ENCODE measurements at regions of chr3 and their contacts with region 1.

Region 1: DNA sequence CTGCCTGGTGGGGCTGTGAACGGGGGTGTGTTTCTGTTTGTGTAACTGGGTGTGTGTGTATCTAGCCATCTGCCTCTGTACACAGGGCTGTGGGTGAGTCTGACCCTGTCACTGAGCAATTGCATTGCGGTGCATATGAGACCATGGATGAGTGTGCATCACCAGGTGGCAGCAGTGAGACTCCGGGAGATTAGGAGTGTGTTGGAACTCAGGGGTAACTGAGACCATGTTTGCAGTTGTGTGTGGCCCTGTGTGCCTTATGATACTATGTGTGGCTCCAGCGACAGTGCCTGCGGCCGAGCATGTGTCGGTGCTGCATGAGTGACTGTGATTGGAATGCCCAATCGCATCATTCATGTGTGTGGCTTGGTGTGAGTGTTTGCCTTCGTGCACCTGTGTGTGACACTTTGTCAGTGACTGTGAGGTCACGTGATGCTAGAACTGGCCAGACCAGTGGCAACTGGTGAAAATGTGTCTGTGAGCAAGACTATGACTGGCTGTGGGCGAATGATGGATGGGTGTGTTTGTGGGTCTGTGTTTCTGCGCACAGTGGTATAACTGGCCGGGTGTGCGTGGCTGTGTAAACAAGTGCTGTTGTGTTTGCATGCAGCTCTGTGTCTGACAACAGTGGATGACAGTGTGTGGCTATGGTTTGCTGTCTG is 14.0 kb downstream of the VILL start:
- DNase-seq: peak; percentile 91
- H3K4me3 ChIP-seq: no peak overlapping the region
- H3K27ac ChIP-seq: peak overlapping the region; percentile 86 to 90
- H3K4me1 ChIP-seq: peaks cover 16% of the 10 kb centered on the region
- H3K27me3 ChIP-seq: no peaks in the 10 kb centered on the region
- CTCF ChIP-seq: peak; percentile 21 to 87 (median 76)
- POLR2A ChIP-seq: no peak

Region 2: GRCh38 chr3:38039101-38039898 is 34.8 kb after region 1 on chr3 and contains the start of gene DLEC1:
- intact Hi-C with region 1: loop called (anchors 5 kb)
- DNase-seq: peak; percentile 59
- H3K4me3 ChIP-seq: peak within 1 kb of the TSS; percentile 23 to 39
- H3K27ac ChIP-seq: no peak within 1 kb of the TSS
- H3K4me1 ChIP-seq: no peaks in the 10 kb centered on the region
- H3K27me3 ChIP-seq: no peaks in the 10 kb centered on the region
- CTCF ChIP-seq: no peak
- POLR2A ChIP-seq: no peak
- total RNA-seq, gene DLEC1: 0.32 to 13.1 TPM

Region 3: DNA sequence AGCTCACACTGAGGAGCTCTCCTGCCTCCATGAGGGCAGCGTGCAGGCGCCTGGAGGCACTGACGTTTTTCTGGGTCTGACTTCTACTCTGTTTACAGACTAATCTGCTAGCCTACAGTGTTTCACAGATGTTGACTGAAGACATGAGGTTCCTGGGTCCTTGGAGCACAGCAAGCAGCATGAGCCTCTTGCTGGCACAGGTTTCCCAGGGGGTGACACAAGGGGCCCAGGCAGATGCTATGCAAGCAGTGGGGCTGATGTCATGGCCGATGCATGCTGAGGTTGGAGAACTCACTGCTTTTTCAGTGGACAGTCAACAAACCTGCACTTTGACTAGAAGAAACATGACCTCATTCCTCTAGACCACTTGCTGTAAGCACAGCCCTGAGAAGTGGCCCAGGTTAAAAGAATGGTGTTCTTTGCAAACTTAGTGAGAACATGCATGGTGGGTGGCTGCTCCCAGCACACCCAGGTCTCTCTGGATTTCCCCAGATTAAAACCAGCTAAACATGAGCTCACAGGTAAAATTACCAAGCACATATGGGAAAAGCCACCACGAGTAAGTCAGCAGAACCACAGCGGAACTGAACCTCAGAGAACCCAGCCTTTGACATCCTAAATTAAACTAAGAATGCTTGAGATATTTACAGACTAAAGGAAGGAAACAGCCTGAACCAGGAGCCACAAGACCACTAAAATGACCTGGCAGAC is 49.9 kb after region 1 on chr3:
- intact Hi-C with region 1: no loop called
- DNase-seq: no peak
- H3K4me3 ChIP-seq: no peak overlapping the region
- H3K27ac ChIP-seq: no peak overlapping the region
- H3K4me1 ChIP-seq: no peaks in the 10 kb centered on the region
- H3K27me3 ChIP-seq: no peaks in the 10 kb centered on the region
- CTCF ChIP-seq: no peak
- POLR2A ChIP-seq: no peak

Measured in prostate gland (tissue), 2 donors.